Cardiac septum (tissue), 1 donor: ENCODE measurements at regions of chr9 and their contacts with region 1.

Region 1: GRCh38 chr9:69190086-69190862 is 16.2 kb downstream of the TJP2 start:
- DNase-seq: no peak

Region 2: DNA sequence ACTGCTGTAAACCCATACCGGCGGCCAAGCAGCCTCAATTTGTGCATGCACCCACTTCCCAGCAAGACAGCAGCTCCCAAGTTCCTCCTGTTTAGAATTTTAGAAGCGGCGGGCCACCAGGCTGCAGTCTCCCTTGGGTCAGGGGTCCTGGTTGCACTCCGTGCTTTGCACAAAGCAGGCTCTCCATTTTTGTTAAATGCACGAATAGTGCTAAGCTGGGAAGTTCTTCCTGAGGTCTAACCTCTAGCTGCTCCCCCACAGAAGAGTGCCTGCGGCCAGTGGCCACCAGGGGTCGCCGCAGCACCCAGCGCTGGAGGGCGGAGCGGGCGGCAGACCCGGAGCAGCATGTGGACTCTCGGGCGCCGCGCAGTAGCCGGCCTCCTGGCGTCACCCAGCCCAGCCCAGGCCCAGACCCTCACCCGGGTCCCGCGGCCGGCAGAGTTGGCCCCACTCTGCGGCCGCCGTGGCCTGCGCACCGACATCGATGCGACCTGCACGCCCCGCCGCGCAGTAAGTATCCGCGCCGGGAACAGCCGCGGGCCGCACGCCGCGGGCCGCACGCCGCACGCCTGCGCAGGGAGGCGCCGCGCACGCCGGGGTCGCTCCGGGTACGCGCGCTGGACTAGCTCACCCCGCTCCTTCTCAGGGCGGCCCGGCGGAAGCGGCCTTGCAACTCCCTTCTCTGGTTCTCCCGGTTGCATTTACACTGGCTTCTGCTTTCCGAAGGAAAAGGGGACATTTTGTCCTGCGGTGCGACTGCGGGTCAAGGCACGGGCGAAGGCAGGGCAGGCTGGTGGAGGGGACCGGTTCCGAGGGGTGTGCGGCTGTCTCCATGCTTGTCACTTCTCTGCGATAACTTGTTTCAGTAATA is 154.6 kb before region 1 on chr9 and contains the start of gene FXN:
- intact Hi-C with region 1: loop called (anchors 5 kb)
- DNase-seq: peak; percentile 95
- total RNA-seq, gene FXN: 22.9 TPM

Region 3: DNA sequence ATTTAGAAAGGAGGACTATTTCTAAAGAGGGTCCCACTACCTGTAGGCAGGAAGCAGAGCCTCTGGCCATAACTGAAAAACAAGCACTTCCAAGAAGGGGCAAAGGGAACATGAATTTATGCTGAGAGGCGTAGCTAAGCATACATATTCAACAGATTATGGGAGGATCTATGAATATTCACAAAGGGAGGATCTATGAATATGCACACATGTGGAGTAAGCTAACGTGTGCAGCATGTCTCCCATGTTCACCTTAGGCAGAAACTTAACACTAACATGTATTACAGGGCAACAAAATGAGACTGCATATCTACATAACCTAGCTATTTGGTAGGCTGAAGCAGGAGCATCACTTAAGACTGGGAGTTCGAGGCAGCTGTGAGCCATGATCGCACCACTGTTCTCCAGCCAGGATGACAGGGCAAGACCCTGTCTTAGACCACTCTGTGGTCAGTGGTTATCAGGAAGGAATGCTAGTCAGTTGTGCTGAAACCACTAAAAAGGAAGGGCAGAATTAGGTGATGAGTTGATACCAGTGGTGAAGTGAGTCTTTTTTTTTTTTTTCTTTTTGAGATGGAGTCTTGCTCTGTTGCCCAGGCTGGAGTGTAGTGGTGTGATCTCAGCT is 134.0 kb before region 1 on chr9:
- intact Hi-C with region 1: loop called (anchors 1 kb)
- DNase-seq: no peak

Region 4: GRCh38 chr9:69131682-69132081 is 58.6 kb before region 1 on chr9:
- intact Hi-C with region 1: loop called (anchors 5 kb)
- DNase-seq: no peak

Region 5: GRCh38 chr9:69153707-69154521 is 36.4 kb before region 1 on chr9:
- intact Hi-C with region 1: loop called (anchors 5 kb)
- DNase-seq: no peak

Region 6: GRCh38 chr9:69847491-69847890 is 657.2 kb after region 1 on chr9:
- intact Hi-C with region 1: no loop called
- DNase-seq: no peak